ENCODE measurements at regions of chr18 and their contacts with region 1.

Region 1: GRCh38 chr18:2547477-2548087 is 23.7 kb downstream of the METTL4 start:
- DNase-seq: no peak
- H3K4me3 Mint-ChIP-seq: no peak overlapping the region
- H3K27ac Mint-ChIP-seq: no peak overlapping the region
- H3K4me1 Mint-ChIP-seq: peaks cover 5% of the 10 kb centered on the region
- H3K27me3 Mint-ChIP-seq: no peaks in the 10 kb centered on the region

Region 2: GRCh38 chr18:2337552-2338141 is 209.9 kb before region 1 on chr18:
- intact Hi-C with region 1: loop called (anchors 1 kb)
- DNase-seq: peak; percentile 1
- H3K4me3 Mint-ChIP-seq: no peak overlapping the region
- H3K27ac Mint-ChIP-seq: no peak overlapping the region
- H3K4me1 Mint-ChIP-seq: peaks cover 5% of the 10 kb centered on the region
- H3K27me3 Mint-ChIP-seq: peaks cover 4% of the 10 kb centered on the region